ENCODE measurements at regions of chr3 and their contacts with region 1.

Region 1: DNA sequence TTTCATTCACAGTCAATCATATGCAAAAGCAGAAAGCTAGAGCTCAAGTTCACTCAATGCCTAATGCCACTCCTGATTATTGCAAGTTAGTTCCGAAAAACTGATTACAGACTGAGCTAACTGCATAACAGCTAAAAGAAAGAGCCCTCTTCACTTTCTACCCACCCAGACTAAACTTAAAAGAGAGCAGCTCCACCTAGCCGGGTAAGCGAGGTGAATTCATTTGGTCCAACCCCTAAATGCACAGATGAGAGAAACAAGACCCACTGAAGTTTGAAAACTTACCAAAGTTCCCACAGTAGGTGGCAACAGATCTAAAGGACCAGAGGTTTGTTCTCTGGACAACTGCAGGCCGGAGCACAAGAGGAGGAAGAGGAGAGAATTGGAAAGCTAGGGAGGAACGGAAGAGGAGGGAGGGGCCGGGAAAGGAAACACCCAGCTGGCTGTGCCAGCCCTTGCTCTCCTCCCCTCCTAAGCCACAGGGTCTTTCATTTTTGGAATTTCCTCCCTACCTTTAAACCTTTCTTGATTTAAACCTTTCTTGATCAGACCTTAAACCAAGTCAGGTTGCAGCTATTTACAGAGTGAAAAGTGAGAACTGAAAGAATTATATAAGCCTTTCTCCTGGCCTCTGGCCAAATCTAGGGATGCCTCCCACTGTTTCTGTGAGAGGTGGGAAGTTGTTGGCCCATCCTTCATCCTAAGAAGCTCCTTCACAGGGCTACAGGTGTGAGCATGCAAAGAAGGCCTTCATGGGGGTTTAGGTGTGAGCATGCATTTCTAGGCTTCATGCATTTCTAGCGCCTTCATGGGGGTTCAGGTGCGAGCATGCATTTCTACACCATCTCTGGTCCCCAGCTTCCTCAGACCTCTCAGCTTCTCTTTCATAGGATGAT is 114.7 kb upstream of the LMOD3 start:
- DNase-seq: no peak

Region 2: GRCh38 chr3:67245545-67245944 is 1991.5 kb before region 1 on chr3:
- intact Hi-C with region 1: loop called in 1 of 2 experiments (anchors 5 kb)
- DNase-seq: no peak

Region 3: DNA sequence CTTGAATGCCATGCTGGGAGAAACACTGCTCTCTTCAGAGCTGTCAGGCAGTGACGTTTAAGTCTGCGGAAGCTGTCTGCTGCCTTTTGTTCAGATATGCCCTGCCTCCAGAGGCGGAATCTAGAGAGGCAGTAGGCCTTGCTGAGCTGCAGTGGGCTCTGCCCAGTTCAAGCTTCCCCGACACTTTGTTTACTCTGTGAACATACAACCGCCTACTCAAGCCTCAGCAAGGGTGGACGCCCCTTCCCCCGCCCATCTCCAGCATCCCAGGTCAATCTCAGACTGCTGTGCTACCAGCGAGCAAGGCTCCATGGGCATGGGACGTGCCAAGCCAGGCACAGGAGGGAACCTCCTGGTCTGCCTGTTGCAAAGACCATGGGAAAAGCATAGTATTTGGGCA is 404.4 kb before region 1 on chr3:
- intact Hi-C with region 1: no loop called
- DNase-seq: no peak